Mammary epithelial cell (primary cell): ENCODE measurements at regions of chr4 and their contacts with region 1.

Region 1: DNA sequence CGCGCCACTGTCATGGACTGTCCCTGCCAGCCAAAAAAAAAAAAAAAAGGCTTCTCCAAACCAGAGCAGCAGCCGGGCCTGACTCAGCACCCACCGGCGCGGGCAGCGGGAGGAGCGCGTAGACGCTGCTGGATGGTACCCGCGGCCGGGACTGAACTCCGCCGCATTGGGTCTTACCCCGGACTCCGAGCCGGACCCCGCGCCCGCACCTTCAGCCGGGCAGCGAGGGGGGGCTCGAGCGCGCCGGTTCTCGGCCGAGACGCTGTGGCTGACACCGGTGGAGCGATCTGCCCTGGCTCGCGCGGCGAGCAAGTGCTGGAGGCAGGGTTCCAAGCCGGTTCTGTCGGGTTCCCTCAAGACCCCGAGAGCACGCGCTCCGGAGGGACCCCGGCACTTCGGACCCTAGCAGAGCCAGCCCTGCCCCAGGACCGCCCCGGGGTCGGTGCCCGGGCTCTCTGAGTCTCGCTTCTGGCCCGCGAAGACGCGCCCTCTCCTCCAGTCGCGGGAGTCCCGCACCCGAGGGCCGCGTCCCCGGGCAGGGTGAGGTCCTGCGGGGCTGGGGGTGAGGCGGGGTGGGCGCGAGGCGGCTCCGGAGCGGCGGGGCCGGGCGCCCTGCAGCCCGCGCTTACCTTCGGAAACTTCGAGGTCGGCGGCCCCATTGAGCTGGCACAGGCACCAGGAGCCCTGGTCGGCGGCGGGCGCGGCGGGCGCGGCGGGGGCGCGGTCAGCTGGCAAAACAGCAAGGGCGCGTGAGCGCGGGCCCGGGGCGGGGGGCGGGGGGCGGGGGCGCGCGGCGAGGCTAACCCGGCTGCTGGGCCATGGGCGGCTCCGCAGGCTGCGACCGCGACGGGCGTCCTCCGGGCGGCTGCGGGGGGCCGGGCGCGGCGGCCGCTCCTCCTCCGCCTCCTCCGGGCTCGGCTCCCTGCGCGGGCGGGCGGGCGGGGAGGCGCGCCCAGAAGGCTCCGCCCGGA is 11.8 kb upstream of the MAN2B2 start:
- DNase-seq: peak; percentile 28
- H3K4me3 ChIP-seq: peak overlapping the region in 2 of 3 experiments; percentile 19 to 49
- H3K27ac ChIP-seq: no peak overlapping the region
- H3K4me1 ChIP-seq: peaks cover 13% of the 10 kb centered on the region
- H3K27me3 ChIP-seq: peaks cover 5% of the 10 kb centered on the region
- CTCF ChIP-seq: no peak

Region 2: GRCh38 chr4:6640292-6641163 is 77.3 kb after region 1 on chr4 and contains the start of gene MRFAP1:
- CTCF ChIA-PET with region 1: no interaction called
- dilution Hi-C with region 1: no loop called
- in situ Hi-C with region 1: no loop called
- intact Hi-C with region 1: loop called (anchors 10 kb)
- DNase-seq: peak; percentile 96
- H3K4me3 ChIP-seq: peak within 1 kb of the TSS; percentile 77 to 87 (median 85)
- H3K27ac ChIP-seq: peak within 1 kb of the TSS; percentile 89
- H3K4me1 ChIP-seq: peaks cover 12% of the 10 kb centered on the region
- H3K27me3 ChIP-seq: no peaks in the 10 kb centered on the region
- CTCF ChIP-seq: no peak
- total RNA-seq, gene MRFAP1: 71.2 to 248 TPM